ENCODE measurements at regions of chr4 and their contacts with region 1.

Region 1: DNA sequence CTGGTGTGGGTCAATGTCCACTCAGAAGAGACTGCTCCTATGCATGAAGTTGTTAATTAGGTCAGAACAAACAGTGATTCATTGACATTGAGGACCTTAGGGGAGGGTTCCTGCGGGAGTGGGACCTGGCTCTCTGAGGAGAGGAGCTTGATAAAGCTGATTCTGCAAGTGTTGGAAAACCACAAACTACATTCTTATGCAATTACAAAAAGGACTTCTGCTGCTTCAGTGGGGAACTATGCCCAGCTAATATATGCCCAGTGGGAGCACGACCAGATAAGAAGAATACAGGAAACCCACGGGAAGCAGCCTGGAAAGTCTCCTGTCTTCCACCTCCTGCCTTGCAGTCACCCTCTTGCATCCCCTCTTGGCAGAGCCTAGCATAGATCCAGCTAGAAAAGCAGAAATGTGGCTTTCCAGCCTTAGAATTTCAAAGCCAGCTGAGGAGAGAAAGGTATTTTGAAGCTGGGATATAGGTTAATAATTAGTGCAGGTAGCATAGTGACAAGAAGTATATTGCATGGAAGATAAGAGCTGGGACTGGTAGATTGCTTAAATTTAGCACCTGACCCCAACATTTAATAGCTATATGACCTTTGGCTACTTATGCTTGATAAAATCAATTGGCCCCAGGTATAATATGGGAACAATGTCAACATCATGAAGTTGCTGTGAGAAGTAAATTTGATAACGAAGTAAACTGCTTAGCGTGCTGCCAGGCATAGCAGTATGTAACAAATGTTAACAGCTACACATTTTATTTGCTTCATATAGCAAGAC is 34.9 kb upstream of the UGT8 start:
- DNase-seq: no peak
- H3K4me3 ChIP-seq: no peak overlapping the region
- H3K27ac ChIP-seq: no peak overlapping the region
- H3K4me1 ChIP-seq: no peaks in the 10 kb centered on the region
- H3K27me3 ChIP-seq: no peaks in the 10 kb centered on the region
- CTCF ChIP-seq: no peak
- POLR2A ChIP-seq: no peak

Region 2: GRCh38 chr4:114547340-114548134 is 16.2 kb before region 1 on chr4:
- CTCF ChIA-PET with region 1: interaction called, 10 read pairs
- POLR2A ChIA-PET with region 1: no interaction called
- dilution Hi-C with region 1: no loop called
- intact Hi-C with region 1: no loop called
- DNase-seq: no peak
- H3K4me3 ChIP-seq: no peak overlapping the region
- H3K27ac ChIP-seq: no peak overlapping the region
- H3K4me1 ChIP-seq: no peaks in the 10 kb centered on the region
- H3K27me3 ChIP-seq: no peaks in the 10 kb centered on the region
- CTCF ChIP-seq: no peak
- POLR2A ChIP-seq: no peak

Region 3: GRCh38 chr4:115537387-115537786 is 973.7 kb after region 1 on chr4:
- CTCF ChIA-PET with region 1: no interaction called
- POLR2A ChIA-PET with region 1: no interaction called
- dilution Hi-C with region 1: no loop called
- intact Hi-C with region 1: no loop called
- DNase-seq: no peak
- H3K4me3 ChIP-seq: no peak overlapping the region
- H3K27ac ChIP-seq: no peak overlapping the region
- H3K4me1 ChIP-seq: no peaks in the 10 kb centered on the region
- H3K27me3 ChIP-seq: no peaks in the 10 kb centered on the region
- CTCF ChIP-seq: no peak
- POLR2A ChIP-seq: no peak

Measured in endothelial cell of umbilical vein (primary cell).